ENCODE measurements at regions of chr10 and their contacts with region 1.

Region 1: GRCh38 chr10:3887885-3888476 is 103.0 kb upstream of the KLF6 start:
- DNase-seq: peak; percentile 72
- H3K4me3 Mint-ChIP-seq: peak overlapping the region; percentile 69
- H3K27ac Mint-ChIP-seq: peak overlapping the region; percentile 100
- H3K4me1 Mint-ChIP-seq: peaks cover 78% of the 10 kb centered on the region
- H3K27me3 Mint-ChIP-seq: no peaks in the 10 kb centered on the region
- CTCF ChIP-seq: no peak

Region 2: GRCh38 chr10:3811291-3811870 is 76.6 kb before region 1 on chr10:
- CTCF ChIA-PET with region 1: no interaction called
- intact Hi-C with region 1: loop called (anchors 1 kb)
- DNase-seq: peak; percentile 55
- H3K4me3 Mint-ChIP-seq: peak overlapping the region; percentile 43
- H3K27ac Mint-ChIP-seq: peak overlapping the region; percentile 85
- H3K4me1 Mint-ChIP-seq: peaks cover 74% of the 10 kb centered on the region
- H3K27me3 Mint-ChIP-seq: no peaks in the 10 kb centered on the region
- CTCF ChIP-seq: no peak

Region 3: GRCh38 chr10:3852147-3852904 is 35.7 kb before region 1 on chr10:
- CTCF ChIA-PET with region 1: interaction called, 8 read pairs
- intact Hi-C with region 1: loop called (anchors 1 kb)
- DNase-seq: peak; percentile 80
- H3K4me3 Mint-ChIP-seq: peak overlapping the region; percentile 55
- H3K27ac Mint-ChIP-seq: peak overlapping the region; percentile 97
- H3K4me1 Mint-ChIP-seq: peaks cover 46% of the 10 kb centered on the region
- H3K27me3 Mint-ChIP-seq: no peaks in the 10 kb centered on the region
- CTCF ChIP-seq: no peak

Region 4: DNA sequence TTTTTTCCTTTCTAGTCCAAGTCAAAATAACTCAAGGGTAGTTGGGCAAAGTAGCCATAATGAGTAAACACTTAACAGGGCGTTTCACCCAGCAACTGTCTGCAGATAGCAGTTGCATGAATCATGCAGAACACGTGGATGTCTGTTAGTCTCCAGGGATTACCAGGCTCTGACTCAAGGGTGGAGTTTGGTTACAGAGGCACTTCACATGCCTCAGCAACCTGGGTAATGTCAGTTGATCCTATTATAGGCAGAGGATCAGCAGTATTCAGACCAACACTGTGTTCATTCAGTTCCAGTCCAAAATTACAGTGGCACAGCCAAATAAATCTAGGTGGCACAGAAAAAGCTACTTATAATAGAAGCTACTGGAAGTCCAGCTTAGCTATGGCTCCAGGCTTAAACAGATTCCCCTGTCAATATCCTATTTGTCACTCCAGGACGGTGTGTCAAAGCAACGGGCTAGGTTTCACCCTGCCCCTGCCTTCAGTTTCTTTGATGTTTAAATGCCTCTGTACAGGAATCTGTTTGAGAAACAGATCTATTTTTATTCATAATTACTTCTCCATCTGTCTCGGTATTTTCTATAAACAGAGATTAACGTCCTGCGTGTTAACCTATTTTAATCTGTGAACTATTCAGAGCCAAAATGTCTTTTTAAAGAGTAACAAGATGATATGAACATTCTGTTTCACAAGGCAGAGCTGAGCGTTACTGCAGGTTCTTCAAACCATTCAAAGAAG is 775.4 kb after region 1 on chr10:
- CTCF ChIA-PET with region 1: no interaction called
- intact Hi-C with region 1: loop called (anchors 10 kb)
- DNase-seq: peak; percentile 84
- H3K4me3 Mint-ChIP-seq: peak overlapping the region; percentile 25
- H3K27ac Mint-ChIP-seq: peak overlapping the region; percentile 98
- H3K4me1 Mint-ChIP-seq: peaks cover 30% of the 10 kb centered on the region
- H3K27me3 Mint-ChIP-seq: no peaks in the 10 kb centered on the region
- CTCF ChIP-seq: no peak